Endothelial cell of umbilical vein (primary cell): ENCODE measurements at regions of chr11 and their contacts with region 1.

Region 1: DNA sequence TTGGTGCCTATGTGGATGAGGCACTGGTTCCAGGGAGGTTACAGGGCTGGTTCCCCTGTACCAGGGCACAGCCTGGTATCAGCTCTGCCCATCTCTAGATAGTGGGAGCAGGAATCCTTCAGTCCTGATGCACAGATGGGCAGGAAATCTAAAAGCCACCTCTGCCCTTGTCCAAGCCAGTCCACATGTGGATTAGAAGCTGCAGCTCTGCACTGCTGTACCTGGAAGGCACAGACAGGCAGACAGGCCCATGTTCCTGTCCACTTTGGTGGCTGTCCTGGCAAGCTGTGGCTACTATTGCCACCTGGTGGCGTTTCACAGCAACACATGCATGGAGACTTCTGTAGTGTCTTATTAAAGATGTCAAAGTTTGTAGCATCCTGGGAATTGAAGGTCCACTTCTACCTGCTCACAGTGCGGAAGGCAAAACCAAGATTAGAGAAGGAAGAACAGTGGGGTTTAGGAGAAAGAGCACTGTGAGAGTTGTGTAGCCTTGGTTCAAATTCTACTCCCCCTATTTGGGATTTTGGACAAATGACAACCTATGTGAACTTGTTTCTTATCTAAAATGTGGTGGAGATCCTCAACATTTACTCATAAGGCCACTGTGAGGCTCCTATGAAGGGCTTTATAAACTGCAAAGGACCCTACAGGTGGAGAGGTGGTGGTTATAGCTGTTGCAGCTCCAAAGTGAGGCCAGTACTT is 30.1 kb downstream of the NAV2 start:
- DNase-seq: peak; percentile 82
- H3K4me3 ChIP-seq: no peak overlapping the region
- H3K27ac ChIP-seq: no peak overlapping the region
- H3K4me1 ChIP-seq: peaks cover 8% of the 10 kb centered on the region
- H3K27me3 ChIP-seq: no peaks in the 10 kb centered on the region
- CTCF ChIP-seq: peak; percentile 75 to 76
- POLR2A ChIP-seq: no peak

Region 2: GRCh38 chr11:19344751-19345518 is 397.8 kb before region 1 on chr11:
- CTCF ChIA-PET with region 1: no interaction called
- POLR2A ChIA-PET with region 1: no interaction called
- dilution Hi-C with region 1: no loop called
- intact Hi-C with region 1: loop called (anchors 10 kb)
- DNase-seq: peak; percentile 43
- H3K4me3 ChIP-seq: peak overlapping the region in 2 of 3 experiments; percentile 32 to 58
- H3K27ac ChIP-seq: no peak overlapping the region
- H3K4me1 ChIP-seq: peaks cover 12% of the 10 kb centered on the region
- H3K27me3 ChIP-seq: peaks cover 23 to 36% of the 10 kb centered on the region in 2 experiments
- CTCF ChIP-seq: no peak
- POLR2A ChIP-seq: no peak

Region 3: DNA sequence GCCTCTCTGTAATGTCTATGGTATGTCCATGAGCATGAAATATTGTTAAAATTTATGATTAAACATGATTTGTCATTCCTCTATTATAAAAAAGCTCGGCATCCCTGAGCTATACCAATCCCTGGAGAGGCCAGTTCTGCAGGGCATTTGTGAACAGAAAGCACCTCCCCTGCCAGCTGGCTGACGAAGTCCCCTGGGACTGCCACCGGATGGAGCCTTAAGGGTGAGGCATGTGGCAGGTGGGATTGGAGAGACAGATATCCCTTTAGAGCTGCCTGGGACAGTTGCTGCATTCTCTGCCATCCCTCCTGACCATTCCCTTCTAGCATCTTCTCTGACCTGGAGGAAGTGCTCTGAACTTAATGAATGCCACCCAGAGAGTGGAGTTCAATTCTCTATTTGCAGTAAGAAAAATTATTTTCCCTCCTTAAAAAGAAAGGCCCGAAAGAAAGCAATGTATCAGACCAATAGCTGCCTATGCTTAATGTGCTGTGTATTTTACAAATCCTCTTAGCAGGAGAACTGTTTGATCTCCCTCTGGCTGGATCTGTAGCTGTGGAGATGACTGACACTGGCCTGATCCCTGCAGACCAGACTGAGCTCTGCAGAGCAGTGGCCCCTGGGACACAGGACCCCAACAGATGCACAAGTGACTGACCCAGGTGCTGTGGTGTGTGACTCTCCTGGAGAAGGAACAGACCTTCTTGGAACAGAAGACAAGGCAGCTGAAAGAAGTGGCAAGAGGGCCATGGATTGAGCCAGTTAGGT is 249.1 kb before region 1 on chr11:
- CTCF ChIA-PET with region 1: no interaction called
- POLR2A ChIA-PET with region 1: no interaction called
- dilution Hi-C with region 1: no loop called
- intact Hi-C with region 1: no loop called
- DNase-seq: no peak
- H3K4me3 ChIP-seq: no peak overlapping the region
- H3K27ac ChIP-seq: no peak overlapping the region
- H3K4me1 ChIP-seq: no peaks in the 10 kb centered on the region
- H3K27me3 ChIP-seq: no peaks in the 10 kb centered on the region
- CTCF ChIP-seq: no peak
- POLR2A ChIP-seq: no peak

Region 4: GRCh38 chr11:19566583-19567379 is 176.0 kb before region 1 on chr11:
- CTCF ChIA-PET with region 1: interaction called, 235 read pairs
- POLR2A ChIA-PET with region 1: no interaction called
- dilution Hi-C with region 1: no loop called
- intact Hi-C with region 1: loop called (anchors 1 kb)
- DNase-seq: no peak
- H3K4me3 ChIP-seq: no peak overlapping the region
- H3K27ac ChIP-seq: no peak overlapping the region
- H3K4me1 ChIP-seq: peaks cover 5% of the 10 kb centered on the region
- H3K27me3 ChIP-seq: no peaks in the 10 kb centered on the region
- CTCF ChIP-seq: no peak
- POLR2A ChIP-seq: no peak

Region 5: DNA sequence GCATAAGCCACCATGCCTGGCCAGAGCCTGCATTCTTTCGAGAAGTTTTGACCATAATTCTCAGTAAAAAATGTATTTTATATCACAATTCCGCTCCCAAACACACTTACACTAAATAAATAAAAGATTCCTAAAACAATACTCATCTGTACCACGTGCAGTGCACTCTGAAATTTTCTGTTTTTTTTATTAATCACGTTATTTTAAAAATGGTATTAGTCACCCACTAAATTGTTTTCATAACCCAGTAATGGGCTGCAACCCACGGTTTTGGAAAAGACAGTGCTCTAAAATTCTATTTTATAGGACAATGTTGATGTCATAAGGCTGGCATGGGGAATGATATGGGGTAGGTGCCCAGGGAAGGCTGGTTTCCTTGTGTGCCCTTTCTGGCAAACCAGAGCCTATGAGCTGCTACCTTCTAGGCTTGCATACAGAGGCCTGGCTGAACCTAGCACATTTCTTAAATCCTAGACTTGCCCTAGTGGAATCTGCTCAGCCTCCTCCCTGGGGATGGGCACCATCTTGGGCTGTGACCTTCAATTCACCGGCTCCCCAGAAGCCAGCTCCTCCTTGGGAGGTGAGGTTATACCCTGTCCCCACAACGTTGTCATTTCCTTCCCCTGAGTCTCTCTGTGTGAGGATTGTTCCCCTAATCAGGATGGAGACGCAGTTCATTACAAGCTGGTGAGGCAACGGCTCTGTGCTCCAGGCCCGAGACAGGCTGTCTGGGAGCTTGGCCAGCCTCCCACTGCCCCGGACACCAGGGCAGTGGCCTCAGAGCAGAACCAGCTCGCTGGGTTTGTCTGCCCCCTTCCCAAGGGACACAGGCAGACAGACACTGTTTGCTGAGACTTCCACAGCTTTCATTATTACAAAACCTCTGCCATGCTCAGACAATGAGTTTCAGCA is 146.6 kb before region 1 on chr11:
- CTCF ChIA-PET with region 1: interaction called, 4 read pairs
- POLR2A ChIA-PET with region 1: no interaction called
- dilution Hi-C with region 1: no loop called
- intact Hi-C with region 1: loop called (anchors 1 kb)
- DNase-seq: peak; percentile 91
- H3K4me3 ChIP-seq: no peak overlapping the region
- H3K27ac ChIP-seq: peak overlapping the region; percentile 95
- H3K4me1 ChIP-seq: peaks cover 34% of the 10 kb centered on the region
- H3K27me3 ChIP-seq: no peaks in the 10 kb centered on the region
- CTCF ChIP-seq: no peak
- POLR2A ChIP-seq: no peak

Region 6: DNA sequence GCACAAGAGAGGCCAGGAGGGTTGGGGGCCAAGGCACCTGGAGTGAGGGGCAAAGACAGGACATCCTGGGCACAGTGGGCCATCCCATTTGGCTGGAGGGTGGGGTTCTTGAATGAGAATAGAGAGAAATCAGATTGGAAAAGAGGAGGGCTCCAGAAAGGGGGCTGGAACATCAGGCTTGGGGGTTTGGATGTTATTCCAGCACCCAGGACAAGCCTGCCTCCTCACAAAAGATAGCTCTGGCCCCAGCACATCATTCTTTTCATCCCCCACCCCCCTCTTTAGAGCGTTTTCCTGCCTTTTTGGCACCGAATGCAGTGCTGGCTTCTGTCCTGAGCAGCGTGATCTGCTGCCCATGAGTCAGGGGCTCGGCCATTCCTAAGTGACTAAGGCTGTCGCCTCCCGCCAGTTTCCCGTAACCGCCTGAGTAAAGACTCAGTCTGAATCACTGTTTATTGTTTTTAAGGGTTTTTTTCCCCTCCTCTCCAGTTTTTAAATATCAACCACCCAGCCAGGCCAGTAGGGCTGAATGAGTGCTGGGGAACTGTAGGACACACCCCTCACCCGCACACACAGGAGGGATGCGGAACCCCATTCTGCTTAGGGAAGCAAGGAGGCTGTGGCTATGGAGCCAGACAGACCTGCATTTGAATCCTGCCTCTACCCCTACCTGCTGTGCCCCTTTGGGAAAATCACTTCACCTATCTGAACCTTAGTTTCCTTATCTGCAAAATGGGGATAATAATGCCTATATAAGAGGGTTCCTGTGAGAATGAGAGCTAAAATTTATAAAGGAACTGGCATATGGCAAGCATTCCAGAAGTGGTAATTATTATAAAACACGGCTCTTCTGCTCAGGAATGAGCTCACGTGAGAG is 62.5 kb before region 1 on chr11:
- CTCF ChIA-PET with region 1: interaction called, 6 read pairs
- POLR2A ChIA-PET with region 1: no interaction called
- dilution Hi-C with region 1: no loop called
- intact Hi-C with region 1: loop called (anchors 1 kb)
- DNase-seq: peak; percentile 98
- H3K4me3 ChIP-seq: no peak overlapping the region
- H3K27ac ChIP-seq: peak overlapping the region; percentile 99
- H3K4me1 ChIP-seq: peaks cover 49% of the 10 kb centered on the region
- H3K27me3 ChIP-seq: no peaks in the 10 kb centered on the region
- CTCF ChIP-seq: no peak
- POLR2A ChIP-seq: no peak

Region 7: DNA sequence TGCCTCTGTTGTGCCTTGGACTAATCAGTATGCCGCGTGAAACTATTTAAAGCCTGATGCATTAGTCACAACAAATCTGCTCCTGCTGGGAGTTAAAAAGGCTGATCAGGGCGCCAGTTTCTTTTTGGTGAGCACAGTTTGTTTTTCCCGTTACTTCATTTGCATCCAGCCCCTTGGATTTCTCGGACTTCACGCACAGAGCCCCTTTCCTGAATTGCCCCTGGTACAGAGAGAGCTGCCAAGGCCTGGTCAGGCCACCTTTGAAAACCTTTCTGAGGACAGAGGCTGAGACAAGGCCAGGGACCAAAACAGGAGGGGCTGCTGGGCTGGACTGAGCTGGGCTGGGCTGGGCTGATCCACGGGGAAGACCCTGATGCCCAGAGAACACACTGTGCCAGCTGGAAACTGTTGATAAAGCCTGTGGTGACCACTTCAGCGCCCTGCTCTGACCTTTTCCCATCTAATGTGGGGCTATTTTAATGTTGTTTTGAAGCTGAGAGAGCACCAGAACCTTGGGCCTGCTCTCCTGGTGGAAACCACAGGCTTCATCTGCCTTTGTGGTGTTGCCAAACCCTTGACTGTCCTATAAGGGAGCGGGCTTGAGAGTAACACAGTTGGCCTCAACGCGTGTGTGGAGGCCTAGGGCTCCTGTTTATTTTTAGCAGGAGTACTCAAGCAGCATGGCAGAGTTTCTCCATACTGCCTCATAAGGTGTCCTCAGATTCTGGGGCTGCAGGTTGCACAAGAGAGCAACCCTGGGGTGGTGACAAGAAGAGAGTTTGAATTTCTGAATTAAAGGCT is 14.1 kb after region 1 on chr11:
- CTCF ChIA-PET with region 1: interaction called, 16 read pairs
- POLR2A ChIA-PET with region 1: no interaction called
- dilution Hi-C with region 1: no loop called
- intact Hi-C with region 1: no loop called
- DNase-seq: peak; percentile 46
- H3K4me3 ChIP-seq: no peak overlapping the region
- H3K27ac ChIP-seq: no peak overlapping the region
- H3K4me1 ChIP-seq: no peaks in the 10 kb centered on the region
- H3K27me3 ChIP-seq: no peaks in the 10 kb centered on the region
- CTCF ChIP-seq: no peak
- POLR2A ChIP-seq: no peak